Endothelial cell of umbilical vein (primary cell): ENCODE measurements at regions of chr2 and their contacts with region 1.

Region 1: DNA sequence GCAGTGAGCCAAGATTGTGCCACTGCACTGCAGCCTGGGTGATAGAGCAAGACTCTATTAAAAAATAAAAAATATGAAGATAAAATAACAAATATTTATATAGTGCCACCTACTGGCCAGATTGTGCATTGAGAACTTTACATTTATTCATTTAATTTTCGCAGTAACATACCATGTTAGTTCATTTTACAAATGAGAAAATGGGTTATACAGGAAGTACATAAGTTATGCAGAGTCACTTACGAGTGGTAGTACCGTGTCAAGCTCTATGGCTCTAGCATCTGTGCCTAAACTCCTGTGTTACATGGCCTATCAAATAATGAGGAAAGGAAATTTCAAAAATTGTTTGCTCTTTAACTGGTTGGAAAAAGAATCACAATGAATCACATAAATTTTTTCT is 27.9 kb downstream of the RIF1 start:
- DNase-seq: peak; percentile 58
- H3K4me3 ChIP-seq: no peak overlapping the region
- H3K27ac ChIP-seq: no peak overlapping the region
- H3K4me1 ChIP-seq: no peaks in the 10 kb centered on the region
- H3K27me3 ChIP-seq: no peaks in the 10 kb centered on the region
- CTCF ChIP-seq: peak; percentile 25 to 39
- POLR2A ChIP-seq: no peak

Region 2: DNA sequence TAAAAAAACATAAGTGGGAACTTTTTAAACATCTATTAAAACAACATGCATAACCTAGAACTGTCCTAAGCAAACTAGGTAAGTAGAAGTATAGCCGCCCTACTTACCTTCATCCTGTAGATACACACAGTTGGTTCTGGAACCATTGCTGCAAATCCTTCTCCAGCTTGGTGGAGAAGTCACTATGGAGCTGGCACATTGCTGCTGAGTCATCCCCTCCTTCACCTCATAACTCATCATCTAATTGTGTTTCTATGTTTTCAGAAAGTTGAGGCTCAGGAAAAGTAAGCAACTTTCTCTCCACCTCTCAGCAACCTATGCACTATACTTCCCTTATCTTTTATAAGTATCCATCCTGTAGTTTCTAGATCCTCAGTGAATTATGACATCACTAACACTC is 1580.3 kb before region 1 on chr2:
- CTCF ChIA-PET with region 1: no interaction called
- POLR2A ChIA-PET with region 1: no interaction called
- dilution Hi-C with region 1: no loop called
- intact Hi-C with region 1: no loop called
- DNase-seq: peak; percentile 45
- H3K4me3 ChIP-seq: no peak overlapping the region
- H3K27ac ChIP-seq: no peak overlapping the region
- H3K4me1 ChIP-seq: peaks cover 36% of the 10 kb centered on the region
- H3K27me3 ChIP-seq: no peaks in the 10 kb centered on the region
- CTCF ChIP-seq: no peak
- POLR2A ChIP-seq: no peak

Region 3: GRCh38 chr2:151289369-151290088 is 148.1 kb before region 1 on chr2 and contains the start of gene NMI:
- CTCF ChIA-PET with region 1: interaction called, 17 read pairs
- POLR2A ChIA-PET with region 1: interaction called, 3 read pairs
- dilution Hi-C with region 1: no loop called
- intact Hi-C with region 1: no loop called
- DNase-seq: peak; percentile 82
- H3K4me3 ChIP-seq: peak within 1 kb of the TSS; percentile 75 to 99 (median 78)
- H3K27ac ChIP-seq: peak within 1 kb of the TSS; percentile 90
- H3K4me1 ChIP-seq: peaks cover 16% of the 10 kb centered on the region
- H3K27me3 ChIP-seq: no peaks in the 10 kb centered on the region
- CTCF ChIP-seq: peak in 1 of 2 donors; percentile 15
- POLR2A ChIP-seq: peak; percentile 53
- total RNA-seq, gene NMI: 17.1 and 24.9 TPM in 2 replicates

Region 4: GRCh38 chr2:151422917-151423439 is 14.7 kb before region 1 on chr2:
- CTCF ChIA-PET with region 1: interaction called, 13 read pairs
- POLR2A ChIA-PET with region 1: no interaction called
- dilution Hi-C with region 1: no loop called
- intact Hi-C with region 1: no loop called
- DNase-seq: no peak
- H3K4me3 ChIP-seq: no peak overlapping the region
- H3K27ac ChIP-seq: no peak overlapping the region
- H3K4me1 ChIP-seq: no peaks in the 10 kb centered on the region
- H3K27me3 ChIP-seq: no peaks in the 10 kb centered on the region
- CTCF ChIP-seq: no peak
- POLR2A ChIP-seq: no peak

Region 5: DNA sequence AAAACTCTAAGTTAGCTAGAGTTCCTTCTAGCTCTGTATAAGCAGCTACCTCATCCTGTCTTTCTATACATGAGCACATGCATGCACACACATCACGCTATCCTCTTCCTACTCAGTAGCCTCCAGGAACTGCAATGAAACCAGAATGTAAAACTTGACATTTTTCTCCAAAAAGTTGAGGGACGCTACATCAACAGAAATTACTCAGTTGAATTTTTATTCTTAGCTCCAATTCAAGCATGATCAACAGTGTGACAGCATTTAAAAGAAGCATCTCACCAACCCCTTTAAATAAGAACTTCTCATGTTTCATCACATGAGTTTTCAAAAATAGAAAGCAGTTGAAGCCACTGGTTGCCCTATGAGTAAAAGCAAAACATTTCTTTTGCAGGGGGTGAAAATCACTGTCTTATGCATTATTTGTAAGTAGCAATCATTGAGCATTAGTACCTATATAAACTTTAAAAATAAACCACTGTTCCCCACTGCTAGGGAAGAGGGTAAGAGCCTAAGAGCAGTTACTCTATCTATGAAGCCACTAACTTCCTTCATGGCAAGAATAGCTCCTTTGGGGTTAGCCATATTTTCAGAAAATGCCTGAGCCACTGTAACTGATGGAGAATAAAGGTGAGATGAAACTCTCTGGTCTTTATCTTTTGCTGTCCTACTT is 468.5 kb after region 1 on chr2:
- CTCF ChIA-PET with region 1: no interaction called
- POLR2A ChIA-PET with region 1: no interaction called
- dilution Hi-C with region 1: no loop called
- intact Hi-C with region 1: no loop called
- DNase-seq: no peak
- H3K4me3 ChIP-seq: no peak overlapping the region
- H3K27ac ChIP-seq: no peak overlapping the region
- H3K4me1 ChIP-seq: peaks cover 6% of the 10 kb centered on the region
- H3K27me3 ChIP-seq: peaks cover 0 to 1% of the 10 kb centered on the region in 2 experiments
- CTCF ChIP-seq: no peak
- POLR2A ChIP-seq: no peak